Mammary epithelial cell (primary cell): ENCODE measurements at regions of chr10 and their contacts with region 1.

Region 1: DNA sequence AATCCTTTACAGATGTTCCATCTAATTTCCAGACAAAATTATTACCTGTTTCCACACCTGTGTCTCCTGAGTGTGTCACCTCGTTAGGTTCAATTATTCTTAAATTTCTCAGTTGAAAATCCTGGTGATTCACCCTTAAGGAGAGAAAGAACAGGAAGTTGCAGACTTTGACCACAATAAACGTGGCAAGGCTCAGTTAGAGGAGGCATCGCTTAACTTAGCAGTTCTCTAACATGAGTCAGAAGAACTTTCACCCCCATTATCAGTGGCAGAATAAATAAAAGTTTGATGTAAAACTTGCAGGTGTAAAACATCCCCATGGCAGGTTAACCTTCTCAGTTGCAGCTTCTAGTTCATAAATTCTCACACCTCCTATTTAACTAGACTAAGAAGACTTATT is 8.3 kb downstream of the XPNPEP1 start:
- DNase-seq: peak; percentile 91
- H3K4me3 ChIP-seq: no peak overlapping the region
- H3K27ac ChIP-seq: peak overlapping the region; percentile 44
- H3K4me1 ChIP-seq: peaks cover 46% of the 10 kb centered on the region
- H3K27me3 ChIP-seq: no peaks in the 10 kb centered on the region
- CTCF ChIP-seq: no peak

Region 2: GRCh38 chr10:109894516-109894915 is 20.4 kb before region 1 on chr10:
- CTCF ChIA-PET with region 1: no interaction called
- dilution Hi-C with region 1: no loop called
- in situ Hi-C with region 1: no loop called
- intact Hi-C with region 1: loop called (anchors 1 kb)
- DNase-seq: peak; percentile 89
- H3K4me3 ChIP-seq: no peak overlapping the region
- H3K27ac ChIP-seq: peak overlapping the region; percentile 29
- H3K4me1 ChIP-seq: peaks cover 69% of the 10 kb centered on the region
- H3K27me3 ChIP-seq: no peaks in the 10 kb centered on the region
- CTCF ChIP-seq: no peak

Region 3: GRCh38 chr10:110225756-110226542 is 311.0 kb after region 1 on chr10:
- CTCF ChIA-PET with region 1: no interaction called
- dilution Hi-C with region 1: no loop called
- in situ Hi-C with region 1: no loop called
- intact Hi-C with region 1: loop called (anchors 10 kb)
- DNase-seq: peak; percentile 92
- H3K4me3 ChIP-seq: peak overlapping the region; percentile 73 to 95 (median 92)
- H3K27ac ChIP-seq: peak overlapping the region; percentile 43
- H3K4me1 ChIP-seq: peaks cover 33% of the 10 kb centered on the region
- H3K27me3 ChIP-seq: no peaks in the 10 kb centered on the region
- CTCF ChIP-seq: peak; percentile 54 to 71

Region 4: GRCh38 chr10:110481934-110482333 is 567.0 kb after region 1 on chr10:
- CTCF ChIA-PET with region 1: no interaction called
- dilution Hi-C with region 1: no loop called
- in situ Hi-C with region 1: no loop called
- intact Hi-C with region 1: no loop called
- DNase-seq: no peak
- H3K4me3 ChIP-seq: no peak overlapping the region
- H3K27ac ChIP-seq: no peak overlapping the region
- H3K4me1 ChIP-seq: peaks cover 19% of the 10 kb centered on the region
- H3K27me3 ChIP-seq: no peaks in the 10 kb centered on the region
- CTCF ChIP-seq: no peak